Activated CD4-positive, alpha-beta T cell treated with anti-CD3 and anti-CD28 coated beads for 36 hours (primary cell): ENCODE measurements at regions of chr3 and their contacts with region 1.

Region 1: GRCh38 chr3:12658593-12659058 is 5.3 kb downstream of the RAF1 start:
- DNase-seq: no peak
- ATAC-seq: peak; percentile 7
- H3K4me3 Mint-ChIP-seq: no peak overlapping the region
- H3K27ac Mint-ChIP-seq: peak overlapping the region; percentile 60
- H3K4me1 Mint-ChIP-seq: peaks cover 55% of the 10 kb centered on the region
- H3K27me3 Mint-ChIP-seq: no peaks in the 10 kb centered on the region

Region 2: GRCh38 chr3:12601072-12601471 is 57.6 kb before region 1 on chr3:
- CTCF ChIA-PET with region 1: interaction called, 4 read pairs
- POLR2A ChIA-PET with region 1: no interaction called
- intact Hi-C with region 1: loop called in 1 of 2 experiments (anchors 2 kb)
- DNase-seq: no peak
- ATAC-seq: no peak
- H3K4me3 Mint-ChIP-seq: no peak overlapping the region
- H3K27ac Mint-ChIP-seq: no peak overlapping the region
- H3K4me1 Mint-ChIP-seq: peaks cover 3% of the 10 kb centered on the region
- H3K27me3 Mint-ChIP-seq: no peaks in the 10 kb centered on the region

Region 3: DNA sequence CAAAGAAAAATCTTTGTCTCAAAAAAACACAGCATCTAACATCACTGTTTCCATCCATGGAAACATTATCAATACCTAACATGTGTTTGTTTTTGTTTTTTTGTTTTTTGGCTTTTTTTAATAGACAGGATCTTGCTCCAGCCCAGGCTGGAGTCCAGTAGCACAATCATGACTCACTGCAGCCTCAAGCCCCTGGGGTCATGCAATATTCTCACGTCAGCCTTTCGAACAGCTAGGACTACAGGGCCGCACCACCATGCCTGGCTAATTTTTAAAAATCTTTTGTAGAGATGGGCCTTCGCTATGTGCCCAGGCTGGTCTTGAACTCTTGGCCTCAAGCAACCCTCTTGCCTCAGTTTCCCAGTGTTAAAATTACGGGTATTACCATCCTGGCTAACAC is 47.5 kb before region 1 on chr3:
- CTCF ChIA-PET with region 1: interaction called, 3 read pairs
- POLR2A ChIA-PET with region 1: interaction called, 3 read pairs
- intact Hi-C with region 1: loop called (anchors 1 to 2 kb)
- DNase-seq: no peak
- ATAC-seq: no peak
- H3K4me3 Mint-ChIP-seq: no peak overlapping the region
- H3K27ac Mint-ChIP-seq: no peak overlapping the region
- H3K4me1 Mint-ChIP-seq: peaks cover 62% of the 10 kb centered on the region
- H3K27me3 Mint-ChIP-seq: no peaks in the 10 kb centered on the region

Region 4: GRCh38 chr3:12750223-12750622 is 91.6 kb after region 1 on chr3:
- CTCF ChIA-PET with region 1: no interaction called
- POLR2A ChIA-PET with region 1: no interaction called
- intact Hi-C with region 1: no loop called
- DNase-seq: no peak
- ATAC-seq: peak; percentile 45
- H3K4me3 Mint-ChIP-seq: no peak overlapping the region
- H3K27ac Mint-ChIP-seq: no peak overlapping the region
- H3K4me1 Mint-ChIP-seq: peaks cover 9% of the 10 kb centered on the region
- H3K27me3 Mint-ChIP-seq: peaks cover 4% of the 10 kb centered on the region

Region 5: DNA sequence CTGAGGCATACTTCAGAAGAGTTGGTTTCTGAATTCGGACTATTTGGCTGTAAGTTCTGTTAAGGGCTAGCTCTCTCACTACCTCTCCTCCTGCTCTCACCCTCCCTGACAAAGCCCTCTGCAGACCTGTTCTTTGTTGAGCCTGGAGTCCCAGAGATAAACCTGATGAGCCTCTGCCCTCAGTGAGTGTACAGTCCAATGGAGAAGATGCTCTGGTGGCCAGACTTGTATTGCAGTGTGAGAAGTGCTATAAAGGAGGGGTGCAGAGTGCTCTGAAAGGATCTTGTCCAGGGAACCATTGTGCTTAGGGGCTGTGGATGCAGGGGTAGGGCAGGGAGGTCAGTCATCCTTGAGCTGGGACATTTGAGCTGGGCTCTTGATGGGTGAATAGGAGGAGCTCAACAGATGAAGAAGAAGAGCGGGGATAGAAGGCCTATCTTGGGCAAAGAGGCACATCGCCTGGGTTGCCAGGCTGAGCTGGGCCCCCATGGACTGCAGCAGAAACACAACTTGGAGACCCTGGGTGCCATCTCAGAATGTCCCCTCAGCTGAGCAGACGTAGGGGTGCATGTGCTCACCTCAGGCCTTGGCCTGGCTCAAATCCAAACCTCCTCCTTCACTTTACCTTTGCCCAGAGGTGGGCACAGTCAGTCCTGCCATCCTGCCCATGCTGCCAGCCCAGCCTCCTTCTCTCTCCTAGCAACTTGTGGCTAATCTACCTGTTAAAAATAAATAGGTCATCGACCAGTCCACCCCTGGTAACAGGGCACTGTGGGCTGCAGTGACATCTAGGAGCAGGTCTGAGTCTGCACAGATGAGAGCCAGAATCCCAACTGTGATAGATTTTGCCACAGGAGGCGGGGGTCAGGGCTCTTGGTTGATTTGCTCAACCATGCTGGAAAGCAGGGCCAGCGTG is 141.2 kb after region 1 on chr3:
- CTCF ChIA-PET with region 1: no interaction called
- POLR2A ChIA-PET with region 1: no interaction called
- intact Hi-C with region 1: no loop called
- DNase-seq: no peak
- ATAC-seq: no peak
- H3K4me3 Mint-ChIP-seq: no peak overlapping the region
- H3K27ac Mint-ChIP-seq: no peak overlapping the region
- H3K4me1 Mint-ChIP-seq: peaks cover 16% of the 10 kb centered on the region
- H3K27me3 Mint-ChIP-seq: no peaks in the 10 kb centered on the region